Heart left ventricle (tissue), 16 donors: ENCODE measurements at regions of chr22 and their contacts with region 1.

Region 1: GRCh38 chr22:23237201-23237798 is 57.0 kb downstream of the BCR start:
- DNase-seq: peak; percentile 83 to 93 (median 87)
- ATAC-seq: peak; percentile 56 to 78 (median 72)
- H3K4me3 ChIP-seq: no peak overlapping the region
- H3K27ac ChIP-seq: peak overlapping the region in 9 of 12 donors; percentile 4 to 61 (median 20)
- H3K4me1 ChIP-seq: peaks cover 0 to 71% (median 30%) of the 10 kb centered on the region in 12 donors
- H3K27me3 ChIP-seq: no peaks in the 10 kb centered on the region
- CTCF ChIP-seq: no peak
- POLR2A ChIP-seq: no peak

Region 2: DNA sequence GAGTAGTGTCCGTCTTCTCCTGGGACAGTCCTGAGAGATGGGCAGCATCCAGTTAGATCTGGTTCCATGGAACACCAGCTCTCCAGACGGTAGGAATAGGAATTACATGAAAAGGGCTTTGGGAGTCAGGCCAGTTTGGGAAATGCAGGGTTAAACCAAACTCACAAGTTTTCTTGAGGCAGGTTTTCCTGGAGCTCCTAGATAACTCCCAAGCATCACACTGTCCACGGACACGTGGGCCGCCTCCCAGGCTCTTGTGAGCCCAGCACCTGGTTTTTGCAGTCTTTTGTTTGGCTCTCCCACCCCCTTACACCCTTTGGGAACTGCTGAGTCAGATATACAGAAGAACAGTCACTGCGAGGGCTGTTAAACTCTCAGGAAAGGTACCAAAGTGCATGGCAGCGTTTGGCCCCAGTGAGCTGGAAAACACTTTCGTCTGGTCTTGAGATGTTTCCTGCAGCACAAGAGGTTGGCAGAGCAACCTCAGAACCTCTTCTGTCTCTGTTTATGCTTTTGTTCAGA is 33.0 kb after region 1 on chr22:
- intact Hi-C with region 1: loop called in 1 of 10 experiments (anchors 5 kb)
- DNase-seq: no peak
- ATAC-seq: no peak
- H3K4me3 ChIP-seq: no peak overlapping the region
- H3K27ac ChIP-seq: no peak overlapping the region
- H3K4me1 ChIP-seq: peaks cover 0 to 3% (median 0%) of the 10 kb centered on the region in 12 donors
- H3K27me3 ChIP-seq: no peaks in the 10 kb centered on the region
- CTCF ChIP-seq: no peak
- POLR2A ChIP-seq: no peak